ENCODE measurements at regions of chr2 and their contacts with region 1.

Region 1: GRCh38 chr2:99066075-99066958 is 75.2 kb upstream of the C2orf15 start:
- DNase-seq: peak; percentile 51
- H3K4me3 ChIP-seq: no peak overlapping the region
- H3K27ac ChIP-seq: no peak overlapping the region
- H3K4me1 ChIP-seq: peaks cover 3% of the 10 kb centered on the region
- H3K27me3 ChIP-seq: peaks cover 7% of the 10 kb centered on the region
- CTCF ChIP-seq: peak; percentile 60

Region 2: DNA sequence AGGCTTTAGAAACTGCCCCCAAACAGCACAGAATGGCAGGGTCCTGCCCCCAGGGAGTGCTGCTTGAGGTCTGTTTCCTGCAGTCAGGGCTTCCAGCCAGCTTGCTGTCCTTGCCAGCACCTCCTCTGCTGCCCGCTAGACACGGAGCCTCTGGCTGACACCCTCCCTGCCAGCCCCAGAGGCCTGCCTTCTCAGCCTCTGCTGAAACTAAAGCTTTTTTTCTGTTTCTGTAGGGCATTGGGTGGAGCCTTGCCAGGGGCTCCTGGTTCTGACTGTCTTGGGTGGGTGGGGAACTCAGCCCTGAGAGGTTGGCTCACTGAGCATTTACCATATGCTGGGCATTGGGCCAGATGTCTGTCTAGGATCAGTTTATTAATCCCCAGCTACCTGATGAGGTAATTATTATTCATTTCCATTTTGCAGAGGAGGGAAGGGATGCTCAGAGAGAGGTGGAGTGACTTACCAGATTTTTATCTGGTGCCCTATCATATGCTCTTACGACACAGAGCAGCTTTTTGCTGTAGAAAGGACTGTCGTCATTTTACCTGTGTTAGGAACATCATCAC is 586.3 kb before region 1 on chr2:
- CTCF ChIA-PET with region 1: no interaction called
- POLR2A ChIA-PET with region 1: no interaction called
- intact Hi-C with region 1: no loop called
- DNase-seq: peak; percentile 82
- H3K4me3 ChIP-seq: no peak overlapping the region
- H3K27ac ChIP-seq: peak overlapping the region; percentile 50
- H3K4me1 ChIP-seq: peaks cover 63% of the 10 kb centered on the region
- H3K27me3 ChIP-seq: no peaks in the 10 kb centered on the region
- CTCF ChIP-seq: no peak

Region 3: DNA sequence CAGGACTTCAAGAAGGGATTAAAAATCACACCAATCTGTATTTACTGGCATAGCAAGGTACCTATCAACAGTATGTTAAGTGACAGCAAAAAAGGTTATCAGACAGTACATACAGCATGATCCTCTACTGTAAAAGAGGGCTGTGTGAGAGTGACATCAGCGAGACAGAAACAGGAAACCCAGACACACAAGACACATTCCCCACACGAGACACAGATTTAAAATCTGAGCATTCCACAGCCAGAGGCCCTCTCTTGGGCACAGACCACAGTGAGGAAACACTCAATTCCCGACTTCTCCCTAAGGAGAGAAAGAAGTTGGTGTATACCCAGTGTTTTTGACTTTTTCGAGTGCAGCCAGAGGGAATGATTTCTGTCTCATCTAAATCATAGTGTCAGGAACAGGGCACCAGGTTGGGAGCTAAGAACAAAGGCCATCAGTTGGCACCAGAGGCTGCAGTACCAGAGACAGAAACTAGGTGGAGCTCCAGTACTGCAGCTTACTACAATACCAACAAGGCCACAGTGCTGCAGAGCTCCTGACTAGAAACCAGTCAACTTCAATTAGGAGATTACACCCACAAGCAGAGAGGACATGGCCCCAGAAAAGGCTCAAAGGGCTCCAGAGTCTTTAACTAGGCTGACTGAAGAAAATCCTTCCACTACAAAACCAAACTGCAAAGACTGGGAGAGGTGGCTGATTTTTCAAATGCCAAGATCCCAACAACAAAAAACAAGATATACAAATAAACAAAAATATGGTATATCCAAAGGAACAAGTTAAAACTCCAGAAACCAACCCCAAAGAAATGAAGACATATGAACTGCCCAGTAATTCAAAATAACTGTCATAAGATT is 417.0 kb before region 1 on chr2:
- CTCF ChIA-PET with region 1: interaction called, 20 read pairs
- POLR2A ChIA-PET with region 1: no interaction called
- intact Hi-C with region 1: loop called (anchors 5 kb)
- DNase-seq: peak; percentile 82
- H3K4me3 ChIP-seq: no peak overlapping the region
- H3K27ac ChIP-seq: no peak overlapping the region
- H3K4me1 ChIP-seq: no peaks in the 10 kb centered on the region
- H3K27me3 ChIP-seq: peaks cover 8% of the 10 kb centered on the region
- CTCF ChIP-seq: peak; percentile 95

Measured in A673 (cell line).